G401 (cell line): ENCODE measurements at regions of chr1 and their contacts with region 1.

Region 1: GRCh38 chr1:231590453-231591198 is 36.0 kb upstream of the DISC1 start:
- DNase-seq: peak; percentile 64

Region 2: DNA sequence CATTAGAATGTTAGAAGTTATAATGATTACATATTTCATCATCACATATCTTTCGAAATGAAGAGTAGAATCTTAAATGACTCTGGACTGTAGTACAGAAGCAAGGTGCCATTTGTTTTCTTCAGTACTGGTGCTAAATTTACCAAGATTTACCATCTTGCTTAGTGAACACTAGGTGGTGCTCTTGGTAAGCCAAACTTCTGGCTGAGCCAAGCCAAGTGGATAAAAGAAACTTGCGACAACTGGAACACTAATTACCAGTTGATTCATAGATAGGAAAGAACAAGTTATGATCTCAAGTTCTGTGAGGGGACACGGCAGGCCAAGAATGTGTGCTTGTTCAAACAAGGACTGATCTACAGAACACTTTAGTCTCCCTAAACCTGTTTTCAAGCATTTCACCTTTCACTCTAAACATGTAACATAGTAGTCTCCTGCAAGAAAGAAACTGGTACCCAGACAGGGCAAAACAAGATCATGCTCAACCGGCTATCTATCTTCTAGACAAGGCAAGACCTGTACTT is 232.7 kb before region 1 on chr1:
- in situ Hi-C with region 1: loop called (anchors 25 kb)
- DNase-seq: peak; percentile 72

Region 3: DNA sequence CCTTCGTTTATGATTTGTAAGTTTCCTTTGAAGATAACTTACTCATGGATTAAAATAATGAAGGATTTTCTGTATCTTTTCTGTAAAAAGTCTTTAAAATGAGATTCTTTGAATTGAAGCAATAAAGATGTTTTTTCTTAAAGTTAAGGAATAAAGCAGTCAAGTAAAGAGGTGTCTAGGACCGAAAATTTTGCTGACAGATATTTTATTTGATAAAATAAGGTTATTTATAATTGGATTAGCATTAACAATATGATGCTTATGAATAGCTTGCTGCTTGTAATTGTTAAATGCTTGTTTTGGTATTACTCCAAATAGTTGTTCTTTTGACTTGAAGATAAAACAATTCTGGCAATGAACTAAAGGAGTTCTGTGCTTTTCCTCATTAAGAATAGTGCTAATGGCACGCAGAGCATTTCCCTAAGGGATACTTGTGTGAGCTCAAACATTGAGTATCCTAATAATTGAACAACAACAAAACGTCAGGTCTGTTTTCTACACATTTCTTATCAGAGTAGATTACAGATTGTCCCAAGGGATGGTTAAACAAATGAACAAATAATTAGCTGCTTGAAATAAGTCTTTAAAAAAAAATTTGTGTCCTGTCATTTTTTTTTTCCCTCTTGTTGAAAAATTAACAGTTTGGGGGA is 45.6 kb before region 1 on chr1:
- in situ Hi-C with region 1: no loop called
- DNase-seq: no peak